ENCODE measurements at regions of chr9 and their contacts with region 1.

Region 1: GRCh38 chr9:112670991-112671625 is 46.8 kb downstream of the INIP start:
- DNase-seq: no peak
- ATAC-seq: no peak
- H3K4me3 ChIP-seq: no peak overlapping the region
- H3K27ac ChIP-seq: no peak overlapping the region
- H3K4me1 ChIP-seq: no peaks in the 10 kb centered on the region
- H3K27me3 ChIP-seq: no peaks in the 10 kb centered on the region
- CTCF ChIP-seq: no peak

Region 2: DNA sequence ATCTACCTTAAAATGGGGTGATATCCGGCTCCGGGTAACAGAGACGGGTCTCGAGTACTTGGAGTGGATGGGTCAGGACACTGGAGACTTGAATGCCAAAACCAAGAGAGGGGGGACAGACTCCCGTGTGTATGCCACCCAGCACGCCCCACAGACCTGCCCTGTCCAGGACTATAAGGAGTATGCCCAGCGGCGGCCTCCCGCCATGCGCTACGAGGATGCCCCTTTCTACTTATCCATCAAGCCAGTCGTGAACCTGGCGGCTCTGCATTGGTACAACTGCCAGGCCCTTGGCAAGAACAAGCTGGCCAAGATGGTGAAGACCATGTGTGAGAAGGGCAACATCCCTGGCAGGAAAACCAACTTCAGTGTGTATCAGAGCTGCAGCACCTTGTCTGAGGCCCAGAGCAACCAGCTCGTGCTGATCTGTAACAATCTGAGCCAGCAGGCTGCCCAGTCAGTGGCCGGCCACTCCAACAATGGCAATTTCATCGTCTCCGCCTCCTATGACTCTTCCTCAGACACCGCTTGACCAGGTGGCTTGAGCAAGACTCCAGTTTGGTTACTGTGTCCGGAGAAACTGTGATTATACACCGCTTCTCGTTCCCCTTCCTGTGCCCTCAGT is 52.6 kb before region 1 on chr9:
- intact Hi-C with region 1: loop called in 1 of 3 experiments (anchors 10 kb)
- DNase-seq: peak in 1 of 6 donors; percentile 50
- ATAC-seq: no peak
- H3K4me3 ChIP-seq: no peak overlapping the region
- H3K27ac ChIP-seq: no peak overlapping the region
- H3K4me1 ChIP-seq: peaks cover 0 to 3% (median 0%) of the 10 kb centered on the region in 3 donors
- H3K27me3 ChIP-seq: no peaks in the 10 kb centered on the region
- CTCF ChIP-seq: no peak

Region 3: GRCh38 chr9:112629671-112630485 is 41.2 kb before region 1 on chr9:
- intact Hi-C with region 1: no loop called
- DNase-seq: no peak
- ATAC-seq: peak in 2 of 4 donors; percentile 50 to 53
- H3K4me3 ChIP-seq: no peak overlapping the region
- H3K27ac ChIP-seq: no peak overlapping the region
- H3K4me1 ChIP-seq: peaks cover 0 to 5% (median 3%) of the 10 kb centered on the region in 3 donors
- H3K27me3 ChIP-seq: no peaks in the 10 kb centered on the region
- CTCF ChIP-seq: no peak

Region 4: DNA sequence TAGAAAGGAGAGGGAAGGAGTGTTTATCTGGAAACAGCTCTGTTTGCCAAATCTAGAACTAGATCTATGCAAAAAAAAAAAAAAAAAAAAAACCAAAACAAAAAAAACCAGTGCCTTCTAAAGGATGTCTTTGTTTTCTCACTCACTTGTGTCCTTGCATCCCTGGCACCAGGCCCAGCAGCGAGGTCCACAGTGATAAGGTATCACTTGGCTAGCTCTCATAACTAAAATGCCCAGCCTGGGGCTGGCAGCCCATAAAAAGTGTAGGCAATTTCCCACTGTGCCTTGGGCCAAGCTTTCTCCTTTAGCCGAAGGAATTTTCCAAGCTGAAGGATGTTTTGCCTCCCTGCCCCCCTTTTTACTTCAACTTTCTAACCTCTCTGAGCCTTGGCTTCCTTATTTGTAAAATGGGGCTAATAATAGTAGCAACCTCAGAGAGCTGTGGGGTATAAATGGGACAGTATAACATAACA is 813.2 kb after region 1 on chr9:
- intact Hi-C with region 1: no loop called
- DNase-seq: peak; percentile 75 to 93 (median 82)
- ATAC-seq: peak; percentile 70 to 86 (median 78)
- H3K4me3 ChIP-seq: no peak overlapping the region
- H3K27ac ChIP-seq: peak overlapping the region in 2 of 4 donors; percentile 23 to 67
- H3K4me1 ChIP-seq: peaks cover 0 to 25% (median 21%) of the 10 kb centered on the region in 3 donors
- H3K27me3 ChIP-seq: no peaks in the 10 kb centered on the region
- CTCF ChIP-seq: no peak

Measured in pancreas (tissue), 10 donors.